Heart left ventricle (tissue), 16 donors: ENCODE measurements at regions of chr15 and their contacts with region 1.

Region 1: DNA sequence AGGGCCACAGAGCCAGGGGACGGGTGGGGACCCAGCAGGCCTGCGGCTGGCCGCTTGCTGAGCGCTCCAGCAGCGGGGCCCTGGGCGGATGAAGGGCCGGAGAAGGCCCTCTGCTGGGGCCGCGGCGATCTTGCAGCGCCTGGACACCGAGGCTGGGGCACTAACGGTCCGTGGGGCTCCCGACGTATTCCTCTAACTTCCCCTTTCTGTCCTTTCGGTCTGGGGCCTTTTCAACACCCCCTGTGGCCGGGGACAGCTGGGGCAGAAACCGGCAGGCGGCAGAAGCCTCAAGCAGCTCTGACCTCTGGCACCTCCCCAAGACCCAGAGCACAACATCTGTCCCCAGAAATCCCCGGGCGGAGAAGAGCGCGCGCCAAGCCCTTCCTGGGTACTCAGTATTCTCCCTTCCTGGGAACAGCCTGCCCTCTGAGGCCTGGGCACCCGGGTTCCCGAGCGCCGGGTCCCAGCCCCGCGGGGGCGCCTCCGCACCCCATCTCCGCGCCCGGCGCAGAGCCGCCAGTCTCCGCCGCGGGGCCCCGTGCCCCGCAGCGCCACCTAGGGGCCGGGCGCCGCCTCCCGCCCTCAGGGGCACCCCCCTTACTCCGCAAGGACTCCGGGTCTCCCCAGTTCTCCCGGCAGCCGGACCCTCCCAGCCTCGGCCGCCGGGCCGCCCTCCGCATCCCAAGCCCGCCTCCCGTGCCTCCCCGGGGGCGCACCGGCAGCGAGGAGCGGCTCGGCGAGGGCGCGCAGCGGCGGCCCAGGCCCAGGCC is 582 bp upstream of the SLCO3A1 start:
- DNase-seq: peak; percentile 82 to 92 (median 84)
- ATAC-seq: peak; percentile 77 to 91 (median 84)
- H3K4me3 ChIP-seq: peak overlapping the region; percentile 42 to 95 (median 80)
- H3K27ac ChIP-seq: peak overlapping the region; percentile 85 to 99 (median 98)
- H3K4me1 ChIP-seq: peaks cover 15 to 67% (median 47%) of the 10 kb centered on the region in 12 donors
- H3K27me3 ChIP-seq: no peaks in the 10 kb centered on the region
- CTCF ChIP-seq: peak; percentile 35 to 84 (median 71)
- POLR2A ChIP-seq: peak in 1 of 2 donors; percentile 31

Region 2: DNA sequence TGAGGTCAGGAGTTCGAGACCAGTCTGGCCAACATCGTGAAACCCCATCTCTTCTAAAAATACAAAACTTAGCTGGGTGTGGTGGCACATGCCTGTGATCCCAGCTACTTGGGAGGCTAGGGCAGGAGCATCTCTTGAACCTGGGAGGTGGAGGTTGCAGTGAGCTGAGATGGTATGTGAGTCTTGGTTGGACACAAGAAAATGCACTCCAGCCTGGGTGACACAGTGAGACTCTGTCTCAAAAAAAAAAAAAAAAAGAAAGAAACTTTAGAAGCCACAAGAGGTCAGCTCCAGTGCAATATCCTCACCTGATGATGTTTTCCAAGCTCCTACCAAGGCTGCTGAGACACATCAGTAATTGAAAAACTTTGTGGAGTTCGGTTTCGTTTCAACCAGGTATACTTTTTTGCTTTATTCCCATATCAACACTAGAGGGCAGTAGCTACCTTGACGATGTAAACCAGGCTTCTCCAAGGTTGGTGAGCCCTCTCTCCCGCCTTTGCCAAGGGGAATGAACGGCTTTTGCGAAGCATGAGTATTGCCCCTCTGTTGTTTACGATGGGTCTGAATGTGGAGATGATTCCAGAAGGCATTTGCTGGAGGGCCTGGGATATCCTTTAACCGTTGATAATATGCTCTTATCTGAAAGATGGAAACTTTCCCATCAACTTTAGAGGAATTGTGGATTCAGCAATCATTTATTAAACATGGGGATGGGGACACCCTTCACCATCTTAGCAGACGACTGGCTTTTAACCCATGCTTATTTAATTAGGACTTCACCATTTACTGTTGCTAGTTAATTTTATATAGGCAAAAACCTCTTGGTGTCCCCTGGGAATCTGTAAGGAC is 550.1 kb before region 1 on chr15:
- intact Hi-C with region 1: loop called (anchors 2 to 10 kb)
- DNase-seq: peak in 4 of 5 donors; percentile 32 to 50 (median 38)
- ATAC-seq: peak; percentile 67 to 89 (median 82)
- H3K4me3 ChIP-seq: no peak overlapping the region
- H3K27ac ChIP-seq: no peak overlapping the region
- H3K4me1 ChIP-seq: peaks cover 0 to 27% (median 9%) of the 10 kb centered on the region in 12 donors
- H3K27me3 ChIP-seq: peaks cover 0 to 9% (median 0%) of the 10 kb centered on the region in 9 donors
- CTCF ChIP-seq: peak; percentile 64 to 84 (median 74)
- POLR2A ChIP-seq: no peak

Region 3: GRCh38 chr15:91529534-91529933 is 323.4 kb before region 1 on chr15:
- intact Hi-C with region 1: loop called in 2 of 10 experiments (anchors 5 to 10 kb)
- DNase-seq: no peak
- ATAC-seq: no peak
- H3K4me3 ChIP-seq: no peak overlapping the region
- H3K27ac ChIP-seq: no peak overlapping the region
- H3K4me1 ChIP-seq: peaks cover 0 to 16% (median 0%) of the 10 kb centered on the region in 12 donors
- H3K27me3 ChIP-seq: no peaks in the 10 kb centered on the region
- CTCF ChIP-seq: no peak
- POLR2A ChIP-seq: no peak

Region 4: GRCh38 chr15:91706322-91707032 is 146.4 kb before region 1 on chr15:
- intact Hi-C with region 1: loop called in 9 of 10 experiments (anchors 1 to 5 kb)
- DNase-seq: peak; percentile 74 to 81 (median 75)
- ATAC-seq: peak; percentile 53 to 92 (median 89)
- H3K4me3 ChIP-seq: peak overlapping the region in 3 of 12 donors; percentile 3 to 28 (median 13)
- H3K27ac ChIP-seq: peak overlapping the region in 5 of 12 donors; percentile 2 to 81 (median 33)
- H3K4me1 ChIP-seq: peaks cover 0 to 26% (median 1%) of the 10 kb centered on the region in 12 donors
- H3K27me3 ChIP-seq: no peaks in the 10 kb centered on the region
- CTCF ChIP-seq: peak; percentile 80 to 94 (median 90)
- POLR2A ChIP-seq: no peak

Region 5: DNA sequence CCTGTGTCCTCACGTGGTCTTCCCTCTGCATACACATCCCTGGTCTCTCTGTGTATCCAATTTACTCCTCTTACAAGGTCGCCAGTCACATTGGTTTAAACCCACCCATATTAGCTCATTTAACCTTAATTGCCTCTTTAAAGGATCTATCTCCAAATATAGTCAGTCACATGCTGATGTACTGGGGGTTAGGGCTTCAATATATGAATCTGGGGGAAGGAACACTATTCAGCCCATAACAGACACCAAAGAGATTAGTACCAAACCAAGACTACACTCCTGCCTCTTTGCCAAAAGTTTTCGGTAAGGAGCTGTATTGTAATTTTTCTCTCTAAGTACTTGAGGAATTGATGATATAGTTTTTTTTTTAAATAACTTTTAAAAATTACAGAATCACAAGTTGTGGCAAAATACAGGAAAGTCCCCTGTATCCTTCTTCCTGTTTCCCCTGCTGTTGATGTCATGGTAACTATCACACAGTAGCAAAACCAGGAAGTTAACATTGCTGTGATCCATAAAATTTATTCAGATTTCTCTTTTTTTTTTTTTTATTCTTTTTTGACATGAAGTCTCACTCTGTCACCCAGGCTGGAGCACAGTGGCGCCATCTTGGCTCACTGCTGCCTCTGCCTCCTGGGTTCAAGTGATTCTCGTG is 68.4 kb after region 1 on chr15:
- intact Hi-C with region 1: loop called in 3 of 10 experiments (anchors 2 to 5 kb)
- DNase-seq: no peak
- ATAC-seq: peak in 1 of 4 donors; percentile 36
- H3K4me3 ChIP-seq: peak overlapping the region in 3 of 12 donors; percentile 4 to 30 (median 25)
- H3K27ac ChIP-seq: peak overlapping the region in 11 of 12 donors; percentile 43 to 87 (median 62)
- H3K4me1 ChIP-seq: peaks cover 9 to 92% (median 81%) of the 10 kb centered on the region in 12 donors
- H3K27me3 ChIP-seq: no peaks in the 10 kb centered on the region
- CTCF ChIP-seq: no peak
- POLR2A ChIP-seq: no peak

Region 6: DNA sequence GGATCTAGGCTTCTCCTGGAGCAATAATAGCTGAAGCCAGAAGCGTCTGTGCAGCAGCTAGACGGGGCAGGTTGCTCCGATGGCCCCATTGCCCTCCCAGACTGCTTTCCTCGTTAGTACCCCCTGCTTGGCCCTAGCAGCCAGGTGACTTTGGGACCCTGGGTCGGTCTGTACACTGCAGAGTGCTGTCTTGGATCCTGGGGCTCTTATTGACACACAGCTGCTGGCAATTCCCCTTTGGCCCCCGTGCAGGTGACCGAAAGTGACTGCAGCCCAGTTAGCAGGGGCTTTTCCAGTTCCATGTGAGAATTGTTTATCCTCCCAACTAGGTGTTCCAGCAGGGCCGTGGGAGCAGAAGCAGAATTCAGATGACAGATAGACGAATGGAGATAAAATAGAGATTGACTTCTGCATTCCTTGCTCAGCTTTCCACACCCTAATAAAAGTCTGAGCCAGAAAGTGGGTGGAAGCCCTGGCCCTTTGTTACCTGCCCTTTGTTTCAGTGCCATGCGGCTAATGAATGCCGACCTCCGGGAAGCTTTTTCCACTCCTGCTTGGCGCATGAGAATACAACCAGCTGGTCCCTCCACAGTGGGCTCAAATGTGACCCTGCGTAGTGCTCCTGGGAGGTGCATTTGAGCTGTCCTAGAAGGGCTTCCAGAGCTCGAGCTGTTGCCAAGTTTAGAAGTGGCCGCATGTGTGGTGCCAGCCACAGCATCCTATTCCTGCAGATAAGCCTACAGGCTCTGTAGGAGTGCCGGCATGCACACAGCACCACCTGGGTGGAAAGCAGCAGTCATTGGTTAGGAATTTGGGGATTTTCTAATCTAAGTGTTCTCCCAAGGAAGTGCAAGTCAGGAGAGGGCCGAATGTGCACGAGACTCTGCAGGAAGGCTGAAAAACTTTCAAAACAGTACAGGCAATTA is 95.0 kb after region 1 on chr15:
- intact Hi-C with region 1: loop called in 7 of 10 experiments (anchors 2 to 10 kb)
- DNase-seq: peak in 4 of 5 donors; percentile 39 to 72 (median 56)
- ATAC-seq: peak; percentile 66 to 74 (median 72)
- H3K4me3 ChIP-seq: no peak overlapping the region
- H3K27ac ChIP-seq: peak overlapping the region; percentile 16 to 78 (median 64)
- H3K4me1 ChIP-seq: peaks cover 13 to 97% (median 63%) of the 10 kb centered on the region in 12 donors
- H3K27me3 ChIP-seq: no peaks in the 10 kb centered on the region
- CTCF ChIP-seq: no peak
- POLR2A ChIP-seq: no peak

Region 7: DNA sequence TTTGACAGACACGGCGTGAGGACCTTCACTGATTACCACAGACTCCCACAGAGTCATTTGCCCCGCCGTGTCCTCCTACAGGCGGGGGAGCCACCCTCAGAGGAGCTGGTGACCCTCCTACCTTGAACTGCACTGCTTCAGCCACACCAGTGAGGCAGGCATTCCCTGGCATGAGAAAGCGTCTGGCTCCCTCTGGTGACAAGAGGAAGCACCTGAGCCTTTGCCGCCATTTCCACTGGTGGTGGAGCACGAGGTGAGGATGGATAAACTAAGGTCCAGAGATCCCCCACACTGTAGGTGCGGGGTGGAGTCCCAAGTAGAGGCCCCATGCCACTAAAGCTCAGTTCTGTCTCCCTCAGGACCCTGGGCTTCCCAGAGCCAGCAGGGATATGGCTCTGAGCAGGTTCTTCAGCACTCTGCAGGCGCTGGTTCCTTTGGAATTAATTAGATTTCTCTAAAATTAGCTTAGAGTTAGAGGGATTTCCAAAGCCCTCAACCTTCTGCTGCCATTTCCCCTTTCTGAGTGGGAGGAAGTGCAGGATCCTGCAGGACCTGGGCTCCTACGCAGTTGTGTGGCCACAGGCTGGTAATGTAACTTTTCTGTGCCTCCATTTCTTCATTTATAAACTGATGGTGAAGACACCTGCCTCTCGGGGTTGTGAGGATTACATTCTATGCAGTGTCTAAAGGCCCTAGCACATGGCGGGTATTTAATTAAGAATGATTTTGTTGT is 224.6 kb after region 1 on chr15:
- intact Hi-C with region 1: loop called (anchors 1 to 5 kb)
- DNase-seq: peak; percentile 72 to 83 (median 81)
- ATAC-seq: peak; percentile 63 to 82 (median 80)
- H3K4me3 ChIP-seq: no peak overlapping the region
- H3K27ac ChIP-seq: peak overlapping the region in 1 of 12 donors; percentile 10
- H3K4me1 ChIP-seq: peaks cover 8 to 71% (median 57%) of the 10 kb centered on the region in 12 donors
- H3K27me3 ChIP-seq: no peaks in the 10 kb centered on the region
- CTCF ChIP-seq: peak; percentile 61 to 89 (median 82)
- POLR2A ChIP-seq: no peak

Region 8: GRCh38 chr15:92655178-92655995 is 802.5 kb after region 1 on chr15 and contains the start of gene FAM174B:
- intact Hi-C with region 1: no loop called
- DNase-seq: peak; percentile 47 to 74 (median 51)
- ATAC-seq: peak in 3 of 4 donors; percentile 70 to 88 (median 80)
- H3K4me3 ChIP-seq: peak within 1 kb of the TSS; percentile 44 to 83 (median 64)
- H3K27ac ChIP-seq: peak within 1 kb of the TSS in 9 of 12 donors; percentile 4 to 73 (median 46)
- H3K4me1 ChIP-seq: peaks cover 0 to 48% (median 14%) of the 10 kb centered on the region in 12 donors
- H3K27me3 ChIP-seq: peaks cover 0 to 16% (median 0%) of the 10 kb centered on the region in 9 donors
- CTCF ChIP-seq: no peak
- POLR2A ChIP-seq: peak in 1 of 2 donors; percentile 18
- total RNA-seq, gene FAM174B: 9.6 to 22.2 (median 12.3) TPM